ENCODE measurements at regions of chr20 and their contacts with region 1.

Region 1: GRCh38 chr20:10747019-10747418 is 73.2 kb upstream of the JAG1 start:
- DNase-seq: no peak
- H3K4me3 ChIP-seq: no peak overlapping the region
- H3K27ac ChIP-seq: peak overlapping the region; percentile 80
- H3K4me1 ChIP-seq: peaks cover 25% of the 10 kb centered on the region
- H3K27me3 ChIP-seq: no peaks in the 10 kb centered on the region
- CTCF ChIP-seq: no peak

Region 2: GRCh38 chr20:10864076-10864918 is 117.3 kb after region 1 on chr20:
- intact Hi-C with region 1: loop called (anchors 10 kb)
- DNase-seq: peak; percentile 25
- H3K4me3 ChIP-seq: peak overlapping the region; percentile 18
- H3K27ac ChIP-seq: peak overlapping the region; percentile 83
- H3K4me1 ChIP-seq: peaks cover 28% of the 10 kb centered on the region
- H3K27me3 ChIP-seq: no peaks in the 10 kb centered on the region
- CTCF ChIP-seq: no peak

Measured in left ventricle myocardium inferior (tissue), 1 donor.